A673 (cell line): ENCODE measurements at regions of chr9 and their contacts with region 1.

Region 1: GRCh38 chr9:133715866-133716563 is 22.1 kb downstream of the SARDH start:
- DNase-seq: peak; percentile 74
- H3K4me3 ChIP-seq: no peak overlapping the region
- H3K27ac ChIP-seq: no peak overlapping the region
- H3K4me1 ChIP-seq: peaks cover 9% of the 10 kb centered on the region
- H3K27me3 ChIP-seq: no peaks in the 10 kb centered on the region
- CTCF ChIP-seq: peak; percentile 77

Region 2: DNA sequence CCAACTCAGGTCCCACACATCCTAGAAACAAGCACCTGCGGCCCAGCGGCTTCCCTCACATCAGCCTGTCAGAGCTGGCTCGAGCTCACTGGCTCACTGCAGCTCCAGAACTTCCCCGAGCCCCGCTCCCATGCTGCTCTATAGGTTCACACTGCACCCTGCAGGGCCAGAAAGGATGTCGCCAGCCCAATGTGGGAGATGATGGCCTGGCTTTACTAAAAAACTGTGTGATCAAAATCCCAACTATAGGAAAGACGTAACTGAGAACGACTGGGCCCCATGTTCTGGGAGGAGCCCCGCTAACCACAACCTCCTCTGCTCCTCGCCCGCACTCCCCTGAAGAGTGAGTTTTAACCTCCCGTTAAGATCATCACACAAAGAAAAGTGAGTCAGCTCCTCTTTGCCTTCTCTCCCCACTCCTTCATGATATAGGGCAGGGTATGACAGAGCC is 344.7 kb before region 1 on chr9:
- CTCF ChIA-PET with region 1: no interaction called
- POLR2A ChIA-PET with region 1: no interaction called
- intact Hi-C with region 1: no loop called
- DNase-seq: no peak
- H3K4me3 ChIP-seq: no peak overlapping the region
- H3K27ac ChIP-seq: peak overlapping the region; percentile 18
- H3K4me1 ChIP-seq: peaks cover under 1% of the 10 kb centered on the region
- H3K27me3 ChIP-seq: no peaks in the 10 kb centered on the region
- CTCF ChIP-seq: no peak

Region 3: GRCh38 chr9:133532937-133533668 is 182.9 kb before region 1 on chr9:
- CTCF ChIA-PET with region 1: no interaction called
- POLR2A ChIA-PET with region 1: no interaction called
- intact Hi-C with region 1: loop called (anchors 1 kb)
- DNase-seq: peak; percentile 77
- H3K4me3 ChIP-seq: no peak overlapping the region
- H3K27ac ChIP-seq: no peak overlapping the region
- H3K4me1 ChIP-seq: peaks cover 5% of the 10 kb centered on the region
- H3K27me3 ChIP-seq: no peaks in the 10 kb centered on the region
- CTCF ChIP-seq: peak; percentile 72

Region 4: DNA sequence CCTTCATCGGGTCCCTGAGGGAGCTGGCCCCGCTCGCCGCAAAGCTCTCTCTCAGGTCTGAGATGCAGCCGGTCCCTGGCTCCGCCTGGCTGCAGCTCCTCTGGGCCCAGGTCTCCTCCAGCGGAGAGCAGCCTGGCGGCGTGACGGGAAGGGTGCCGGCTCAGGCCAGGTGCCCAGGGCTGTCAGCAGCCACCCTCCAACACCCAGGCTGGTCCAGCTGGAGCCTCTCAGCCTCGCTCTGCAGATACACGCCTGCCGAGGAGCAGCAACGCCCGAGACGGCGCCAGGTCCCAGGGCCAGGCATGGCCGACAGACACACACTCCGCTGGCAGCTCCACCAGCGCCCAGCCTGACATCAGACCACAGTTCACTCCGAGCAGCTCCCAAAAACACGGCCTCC is 132.4 kb before region 1 on chr9:
- CTCF ChIA-PET with region 1: no interaction called
- POLR2A ChIA-PET with region 1: interaction called, 12 read pairs
- intact Hi-C with region 1: no loop called
- DNase-seq: no peak
- H3K4me3 ChIP-seq: no peak overlapping the region
- H3K27ac ChIP-seq: no peak overlapping the region
- H3K4me1 ChIP-seq: peaks cover 38% of the 10 kb centered on the region
- H3K27me3 ChIP-seq: no peaks in the 10 kb centered on the region
- CTCF ChIP-seq: no peak

Region 5: DNA sequence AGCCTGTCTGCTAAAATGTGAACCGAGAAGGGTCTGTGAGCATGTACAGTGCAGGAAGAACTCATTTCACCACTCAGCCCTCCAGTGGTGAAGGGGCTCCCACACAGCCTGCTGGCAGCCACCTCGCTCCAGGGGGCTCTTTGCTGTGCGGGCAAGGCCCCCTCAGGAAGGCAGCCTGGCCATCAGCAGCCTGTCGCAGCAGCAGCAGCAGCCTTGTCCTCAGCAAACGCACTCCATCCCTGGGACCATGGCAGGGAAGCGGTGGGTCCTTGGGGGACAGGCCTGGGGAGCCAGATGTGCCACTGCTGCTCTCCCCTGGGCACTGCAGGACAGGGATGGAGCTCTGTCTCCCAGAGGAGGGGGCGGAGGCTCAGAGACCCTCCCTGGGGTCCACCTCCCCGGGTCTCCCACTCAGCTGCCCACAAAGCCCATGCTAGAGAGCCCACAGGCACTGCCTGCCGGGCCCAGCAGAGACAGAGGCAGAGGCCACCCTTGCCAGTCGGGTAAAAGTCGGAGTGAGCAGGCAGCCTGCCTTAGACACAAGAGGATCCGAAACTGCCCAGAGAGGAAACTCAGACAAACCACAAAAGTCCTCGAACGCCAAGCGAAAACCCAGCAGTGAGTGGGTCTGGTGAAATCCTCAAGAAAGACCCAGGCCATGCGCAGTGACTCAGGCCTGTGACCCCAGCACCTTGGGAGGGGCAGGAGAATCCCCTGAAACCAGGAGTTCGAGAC is 343.8 kb after region 1 on chr9:
- CTCF ChIA-PET with region 1: no interaction called
- POLR2A ChIA-PET with region 1: no interaction called
- intact Hi-C with region 1: no loop called
- DNase-seq: no peak
- H3K4me3 ChIP-seq: no peak overlapping the region
- H3K27ac ChIP-seq: peak overlapping the region; percentile 42
- H3K4me1 ChIP-seq: no peaks in the 10 kb centered on the region
- H3K27me3 ChIP-seq: no peaks in the 10 kb centered on the region
- CTCF ChIP-seq: no peak